ENCODE measurements at regions of chr10 and their contacts with region 1.

Region 1: GRCh38 chr10:13371897-13372470 is 23.9 kb upstream of the SEPHS1 start:
- DNase-seq: peak; percentile 87 to 88
- ATAC-seq: peak; percentile 97 to 100
- H3K4me3 ChIP-seq: no peak overlapping the region
- H3K27ac ChIP-seq: no peak overlapping the region
- H3K4me1 ChIP-seq: no peaks in the 10 kb centered on the region
- CTCF ChIP-seq: peak; percentile 95
- EP300 ChIP-seq: no peak
- POLR2A ChIP-seq: no peak
- RAD21 ChIP-seq: peak; percentile 93 to 97

Region 2: DNA sequence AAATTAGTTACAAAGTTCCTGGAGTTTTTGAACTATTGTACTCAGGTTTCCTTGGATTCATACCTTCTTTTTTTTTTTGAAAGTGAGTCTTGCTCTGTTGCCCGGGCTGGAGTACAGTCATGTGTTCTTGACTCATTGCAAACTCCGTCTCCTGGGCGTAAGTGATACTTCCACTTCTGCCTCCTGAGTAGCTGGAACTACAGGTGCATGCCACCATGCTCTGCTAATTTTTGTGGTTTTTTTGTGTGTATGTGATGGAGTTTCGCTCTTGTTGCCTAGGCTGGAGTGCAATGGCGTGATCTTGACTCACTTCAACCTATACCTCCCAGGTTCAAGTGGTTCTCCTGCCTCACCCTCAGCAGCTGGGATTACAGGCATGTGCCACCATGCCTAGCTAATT is 188.4 kb before region 1 on chr10:
- CTCF ChIA-PET with region 1: no interaction called
- POLR2A ChIA-PET with region 1: no interaction called
- DNase-seq: no peak
- ATAC-seq: no peak
- H3K4me3 ChIP-seq: no peak overlapping the region
- H3K27ac ChIP-seq: no peak overlapping the region
- H3K4me1 ChIP-seq: no peaks in the 10 kb centered on the region
- CTCF ChIP-seq: no peak
- EP300 ChIP-seq: no peak
- POLR2A ChIP-seq: no peak
- RAD21 ChIP-seq: no peak

Region 3: GRCh38 chr10:13383399-13383761 is 11.4 kb after region 1 on chr10:
- CTCF ChIA-PET with region 1: interaction called, 28 read pairs
- POLR2A ChIA-PET with region 1: no interaction called
- DNase-seq: no peak
- ATAC-seq: peak; percentile 33 to 64; a peak in 3 of 6 replicates
- H3K4me3 ChIP-seq: peak overlapping the region; percentile 33
- H3K27ac ChIP-seq: no peak overlapping the region
- H3K4me1 ChIP-seq: no peaks in the 10 kb centered on the region
- CTCF ChIP-seq: no peak
- EP300 ChIP-seq: no peak
- POLR2A ChIP-seq: no peak
- RAD21 ChIP-seq: no peak

Region 4: GRCh38 chr10:13440185-13441061 is 68.4 kb after region 1 on chr10:
- CTCF ChIA-PET with region 1: interaction called, 107 read pairs
- POLR2A ChIA-PET with region 1: interaction called, 3 read pairs
- DNase-seq: peak; percentile 32 to 69
- ATAC-seq: peak; percentile 87 to 92
- H3K4me3 ChIP-seq: peak overlapping the region; percentile 45
- H3K27ac ChIP-seq: peak overlapping the region; percentile 20 to 61; a peak in 4 of 6 replicates
- H3K4me1 ChIP-seq: peaks cover 6% of the 10 kb centered on the region; the same call in 1 of the 3 replicates
- CTCF ChIP-seq: peak; percentile 91
- EP300 ChIP-seq: no peak
- POLR2A ChIP-seq: no peak
- RAD21 ChIP-seq: peak; percentile 48 to 66

Region 5: GRCh38 chr10:13536674-13537366 is 164.8 kb after region 1 on chr10:
- CTCF ChIA-PET with region 1: interaction called, 61 read pairs
- POLR2A ChIA-PET with region 1: interaction called, 4 read pairs
- DNase-seq: peak; percentile 70 to 75
- ATAC-seq: peak; percentile 98 to 99
- H3K4me3 ChIP-seq: no peak overlapping the region
- H3K27ac ChIP-seq: peak overlapping the region in 1 of 2 experiments; percentile 50; a peak in 2 of 6 replicates
- H3K4me1 ChIP-seq: no peaks in the 10 kb centered on the region
- CTCF ChIP-seq: peak; percentile 75
- EP300 ChIP-seq: no peak
- POLR2A ChIP-seq: no peak
- RAD21 ChIP-seq: peak; percentile 71 to 75

Region 6: DNA sequence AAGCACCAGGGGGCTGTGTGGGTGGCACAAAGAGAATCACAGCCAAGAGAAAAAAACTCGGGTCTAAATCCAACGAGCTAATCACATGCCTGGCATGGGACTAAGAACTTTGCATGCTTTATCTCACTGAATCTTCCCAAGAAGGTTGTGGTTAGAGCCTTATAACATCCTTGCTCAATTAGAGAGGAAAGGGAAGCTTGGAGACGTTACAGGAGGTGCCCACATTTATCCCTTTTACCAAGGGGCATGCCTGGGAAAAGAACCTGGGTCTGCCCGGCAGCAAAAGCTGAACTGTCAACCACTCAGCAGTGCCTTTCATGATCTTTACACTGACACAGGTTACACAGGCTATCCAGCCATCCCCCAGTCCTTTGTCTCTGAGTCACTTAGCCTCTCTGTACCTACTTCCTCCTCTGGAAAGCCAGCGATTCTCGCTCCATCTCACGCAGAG is 404.9 kb after region 1 on chr10:
- CTCF ChIA-PET with region 1: interaction called, 17 read pairs
- POLR2A ChIA-PET with region 1: no interaction called
- DNase-seq: no peak
- ATAC-seq: no peak
- H3K4me3 ChIP-seq: no peak overlapping the region
- H3K27ac ChIP-seq: no peak overlapping the region
- H3K4me1 ChIP-seq: no peaks in the 10 kb centered on the region
- CTCF ChIP-seq: no peak
- EP300 ChIP-seq: no peak
- POLR2A ChIP-seq: no peak
- RAD21 ChIP-seq: no peak

Region 7: DNA sequence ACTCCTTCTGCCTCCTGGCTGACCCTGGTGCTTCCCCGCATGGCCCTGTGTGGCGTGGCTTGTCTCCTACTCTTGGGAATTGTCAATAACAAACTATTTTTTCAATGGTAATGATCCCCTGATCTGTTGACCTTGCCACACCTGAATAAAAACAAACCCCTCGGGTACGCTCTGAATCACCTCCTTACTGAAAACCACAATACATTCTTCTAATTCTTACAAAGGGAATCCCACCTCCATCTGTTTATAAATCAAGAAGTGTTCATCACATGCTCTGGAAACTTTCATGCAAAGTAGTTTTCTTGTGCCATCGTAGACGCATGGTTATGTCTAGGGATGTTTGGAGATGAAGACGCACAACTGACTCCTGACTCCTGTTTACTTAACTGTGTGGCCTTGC is 712.9 kb after region 1 on chr10:
- CTCF ChIA-PET with region 1: no interaction called
- POLR2A ChIA-PET with region 1: no interaction called
- DNase-seq: peak in 1 of 2 experiments; percentile 6
- ATAC-seq: no peak
- H3K4me3 ChIP-seq: no peak overlapping the region
- H3K27ac ChIP-seq: no peak overlapping the region
- H3K4me1 ChIP-seq: no peaks in the 10 kb centered on the region
- CTCF ChIP-seq: no peak
- EP300 ChIP-seq: no peak
- POLR2A ChIP-seq: no peak
- RAD21 ChIP-seq: no peak

Measured in A549 (cell line).